ENCODE measurements at regions of chr3 and their contacts with region 1.

Region 1: DNA sequence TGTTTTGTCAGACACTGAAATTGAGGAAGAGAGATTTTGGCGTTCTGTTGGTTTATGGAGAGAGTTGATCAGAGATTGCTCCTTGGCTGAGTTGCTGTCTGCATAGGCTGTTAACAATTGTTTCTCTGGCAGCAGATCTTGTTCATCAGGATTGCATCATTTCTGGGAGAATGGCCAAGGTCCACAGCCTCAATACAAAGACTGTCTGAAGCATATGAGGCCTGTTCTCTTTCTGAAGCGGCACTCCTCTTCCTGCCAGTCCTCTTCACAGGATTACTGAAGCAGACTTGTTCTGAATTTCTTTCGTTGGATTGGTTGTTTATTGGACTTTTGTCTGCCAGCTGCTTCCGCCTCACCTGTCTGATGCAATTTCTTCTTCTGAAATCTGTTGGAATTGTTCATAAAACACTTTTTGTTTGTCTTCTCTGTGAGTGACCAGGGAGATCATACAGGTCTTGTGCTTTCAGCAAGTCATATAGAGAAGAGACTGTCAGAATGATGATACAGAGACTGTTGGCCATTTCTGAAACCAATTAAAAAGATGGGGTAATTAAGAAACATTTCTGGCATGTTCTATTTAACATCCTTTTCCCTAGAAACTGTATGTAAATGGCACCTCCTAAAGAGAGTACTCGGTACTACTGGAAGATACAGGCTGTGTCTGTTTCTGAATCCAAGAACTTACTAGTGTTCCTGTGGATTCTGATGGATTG is 25.5 kb downstream of the SETD5 start:
- DNase-seq: peak; percentile 89 to 92
- H3K4me3 ChIP-seq: no peak overlapping the region
- H3K27ac ChIP-seq: peak overlapping the region; percentile 64 to 79 (median 65)
- H3K4me1 ChIP-seq: peaks cover 28 to 43% of the 10 kb centered on the region in 2 donors
- H3K27me3 ChIP-seq: no peaks in the 10 kb centered on the region
- CTCF ChIP-seq: peak in 4 of 6 experiments; percentile 29 to 54 (median 42)
- POLR2A ChIP-seq: peak in 1 of 2 donors; percentile 67

Region 2: GRCh38 chr3:9324944-9325343 is 97.9 kb before region 1 on chr3:
- intact Hi-C with region 1: no loop called
- DNase-seq: no peak
- H3K4me3 ChIP-seq: no peak overlapping the region
- H3K27ac ChIP-seq: no peak overlapping the region
- H3K4me1 ChIP-seq: no peaks in the 10 kb centered on the region
- H3K27me3 ChIP-seq: no peaks in the 10 kb centered on the region
- CTCF ChIP-seq: no peak
- POLR2A ChIP-seq: no peak

Region 3: DNA sequence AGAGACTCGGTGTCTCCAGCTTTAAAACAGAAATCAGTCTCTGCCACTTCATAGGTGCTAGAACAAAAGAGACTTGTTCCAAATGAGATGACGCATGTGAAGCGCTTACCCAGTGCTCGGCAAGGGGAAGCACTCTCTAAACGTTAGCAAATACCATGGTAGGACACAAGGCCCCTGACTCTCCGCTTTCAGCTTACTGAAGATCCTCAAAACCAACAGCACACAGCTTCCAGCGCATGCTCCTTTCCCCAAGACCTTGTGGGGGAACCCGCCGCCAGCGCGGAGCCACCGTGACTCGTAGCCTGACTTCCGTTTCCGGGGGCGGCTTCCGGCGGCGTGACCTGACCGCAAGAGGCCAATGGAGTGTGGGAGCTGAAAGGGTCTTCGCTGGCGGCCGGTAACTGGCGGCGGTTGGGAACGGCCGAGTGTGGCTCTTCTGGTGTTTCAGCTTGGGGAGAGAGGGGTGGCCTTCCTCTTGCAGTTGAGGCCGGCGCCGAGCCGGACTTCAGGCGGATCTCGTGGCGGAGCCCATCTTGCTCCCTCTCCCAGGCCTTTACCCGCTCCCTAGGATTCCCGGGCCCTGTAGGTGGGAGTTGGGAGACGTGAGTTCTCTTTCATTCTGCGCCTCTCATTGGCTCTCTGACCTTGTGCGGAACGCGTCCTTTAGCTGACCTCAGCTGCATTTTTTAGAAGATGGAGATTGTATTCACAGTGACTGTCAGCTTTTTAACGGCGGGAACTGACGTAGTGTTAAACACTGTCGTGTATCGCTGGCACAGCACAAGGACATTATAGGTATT is 59.9 kb before region 1 on chr3 and contains the start of gene THUMPD3:
- intact Hi-C with region 1: loop called (anchors 10 kb)
- DNase-seq: peak; percentile 88 to 93
- H3K4me3 ChIP-seq: peak within 1 kb of the TSS; percentile 36 to 88 (median 57)
- H3K27ac ChIP-seq: peak within 1 kb of the TSS; percentile 54 to 86 (median 79)
- H3K4me1 ChIP-seq: peaks cover 3 to 5% of the 10 kb centered on the region in 2 donors
- H3K27me3 ChIP-seq: no peaks in the 10 kb centered on the region
- CTCF ChIP-seq: no peak
- POLR2A ChIP-seq: peak in 1 of 2 donors; percentile 83
- total RNA-seq, gene THUMPD3: 31.8 to 42.3 (median 34.5) TPM

Region 4: DNA sequence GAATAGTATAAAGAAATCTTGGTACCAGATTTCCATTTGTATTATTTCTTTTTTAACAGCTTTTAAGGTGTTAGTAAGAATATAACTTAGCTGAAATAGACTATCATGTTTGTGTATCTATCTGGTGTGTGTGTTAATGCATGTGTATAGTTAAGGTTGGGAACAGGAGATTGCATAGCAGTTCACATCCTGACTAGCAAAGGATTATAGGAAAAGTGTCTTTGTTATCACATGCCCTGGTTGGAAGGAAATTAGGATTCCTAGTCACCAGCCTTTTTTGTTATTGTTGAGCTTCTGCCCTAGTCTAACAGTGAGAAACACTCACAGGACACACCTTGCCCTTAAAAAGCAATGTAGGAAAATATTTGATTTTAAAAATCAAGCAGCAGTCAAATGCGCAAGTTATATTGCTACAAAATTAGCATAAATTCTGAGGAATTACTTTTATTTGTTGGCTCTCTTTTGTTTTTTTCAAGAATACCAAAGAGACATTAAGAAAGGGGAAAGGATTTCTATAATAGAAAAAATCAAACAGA is 32.8 kb after region 1 on chr3:
- intact Hi-C with region 1: no loop called
- DNase-seq: no peak
- H3K4me3 ChIP-seq: no peak overlapping the region
- H3K27ac ChIP-seq: no peak overlapping the region
- H3K4me1 ChIP-seq: no peaks in the 10 kb centered on the region
- H3K27me3 ChIP-seq: no peaks in the 10 kb centered on the region
- CTCF ChIP-seq: no peak
- POLR2A ChIP-seq: no peak

Measured in thyroid gland (tissue), 4 donors.